ENCODE measurements at regions of chr2 and their contacts with region 1.

Region 1: DNA sequence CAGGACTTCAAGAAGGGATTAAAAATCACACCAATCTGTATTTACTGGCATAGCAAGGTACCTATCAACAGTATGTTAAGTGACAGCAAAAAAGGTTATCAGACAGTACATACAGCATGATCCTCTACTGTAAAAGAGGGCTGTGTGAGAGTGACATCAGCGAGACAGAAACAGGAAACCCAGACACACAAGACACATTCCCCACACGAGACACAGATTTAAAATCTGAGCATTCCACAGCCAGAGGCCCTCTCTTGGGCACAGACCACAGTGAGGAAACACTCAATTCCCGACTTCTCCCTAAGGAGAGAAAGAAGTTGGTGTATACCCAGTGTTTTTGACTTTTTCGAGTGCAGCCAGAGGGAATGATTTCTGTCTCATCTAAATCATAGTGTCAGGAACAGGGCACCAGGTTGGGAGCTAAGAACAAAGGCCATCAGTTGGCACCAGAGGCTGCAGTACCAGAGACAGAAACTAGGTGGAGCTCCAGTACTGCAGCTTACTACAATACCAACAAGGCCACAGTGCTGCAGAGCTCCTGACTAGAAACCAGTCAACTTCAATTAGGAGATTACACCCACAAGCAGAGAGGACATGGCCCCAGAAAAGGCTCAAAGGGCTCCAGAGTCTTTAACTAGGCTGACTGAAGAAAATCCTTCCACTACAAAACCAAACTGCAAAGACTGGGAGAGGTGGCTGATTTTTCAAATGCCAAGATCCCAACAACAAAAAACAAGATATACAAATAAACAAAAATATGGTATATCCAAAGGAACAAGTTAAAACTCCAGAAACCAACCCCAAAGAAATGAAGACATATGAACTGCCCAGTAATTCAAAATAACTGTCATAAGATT is 41.0 kb downstream of the UNC50 start:
- DNase-seq: no peak

Region 2: GRCh38 chr2:98835831-98836385 is 186.5 kb after region 1 on chr2:
- intact Hi-C with region 1: loop called (anchors 2 to 5 kb)
- DNase-seq: no peak

Measured in posterior vena cava (tissue), 2 donors.